Right ventricle myocardium inferior (tissue), 1 donor: ENCODE measurements at regions of chr14 and their contacts with region 1.

Region 1: GRCh38 chr14:100677554-100678468 is 48.9 kb upstream of the DLK1 start:
- DNase-seq: peak; percentile 93
- ATAC-seq: peak; percentile 81

Region 2: GRCh38 chr14:100709289-100710284 is 31.8 kb after region 1 on chr14:
- intact Hi-C with region 1: loop called (anchors 5 kb)
- DNase-seq: no peak
- ATAC-seq: peak; percentile 72

Region 3: DNA sequence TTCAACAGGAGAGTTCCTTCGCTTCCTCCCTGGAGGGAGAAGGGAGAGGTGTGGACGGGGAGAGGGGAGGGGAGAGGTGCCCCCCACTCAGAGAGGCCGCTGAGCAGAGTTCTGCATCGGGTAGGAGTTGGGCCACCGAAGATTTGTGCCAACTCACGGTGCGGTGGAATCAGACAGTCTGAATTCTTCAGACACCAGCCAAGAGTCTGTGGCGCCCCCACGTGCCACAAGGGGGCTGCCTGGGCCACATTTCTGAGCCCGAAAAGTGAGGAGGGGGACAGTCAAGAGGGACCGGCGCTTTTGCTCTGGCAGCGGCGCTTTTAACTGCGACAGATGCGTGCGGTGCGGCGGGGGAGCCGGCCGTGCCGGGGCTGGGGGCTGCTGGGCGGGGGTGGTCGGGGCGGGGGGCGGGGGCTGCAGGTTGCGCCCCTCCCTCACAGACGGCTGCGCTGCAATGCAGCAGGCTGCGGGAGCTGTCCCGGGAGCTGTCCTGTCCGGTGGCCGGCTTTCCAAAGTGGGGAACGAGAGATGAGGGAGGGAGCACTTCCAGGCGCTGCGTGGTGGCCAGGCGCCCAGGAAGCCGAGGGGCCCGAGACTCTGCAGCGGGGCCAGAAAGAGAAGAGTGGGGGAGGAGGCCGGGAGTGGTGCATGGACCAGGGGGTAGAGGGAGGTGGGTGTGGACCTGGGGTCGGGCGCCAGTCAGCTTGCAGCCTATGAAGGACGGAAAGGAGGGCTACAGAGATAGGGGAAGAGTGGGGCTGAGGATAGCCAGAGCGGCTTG is 226.7 kb after region 1 on chr14:
- intact Hi-C with region 1: no loop called
- DNase-seq: no peak
- ATAC-seq: no peak